CD8-positive, alpha-beta memory T cell (primary cell): ENCODE measurements at regions of chr16 and their contacts with region 1.

Region 1: DNA sequence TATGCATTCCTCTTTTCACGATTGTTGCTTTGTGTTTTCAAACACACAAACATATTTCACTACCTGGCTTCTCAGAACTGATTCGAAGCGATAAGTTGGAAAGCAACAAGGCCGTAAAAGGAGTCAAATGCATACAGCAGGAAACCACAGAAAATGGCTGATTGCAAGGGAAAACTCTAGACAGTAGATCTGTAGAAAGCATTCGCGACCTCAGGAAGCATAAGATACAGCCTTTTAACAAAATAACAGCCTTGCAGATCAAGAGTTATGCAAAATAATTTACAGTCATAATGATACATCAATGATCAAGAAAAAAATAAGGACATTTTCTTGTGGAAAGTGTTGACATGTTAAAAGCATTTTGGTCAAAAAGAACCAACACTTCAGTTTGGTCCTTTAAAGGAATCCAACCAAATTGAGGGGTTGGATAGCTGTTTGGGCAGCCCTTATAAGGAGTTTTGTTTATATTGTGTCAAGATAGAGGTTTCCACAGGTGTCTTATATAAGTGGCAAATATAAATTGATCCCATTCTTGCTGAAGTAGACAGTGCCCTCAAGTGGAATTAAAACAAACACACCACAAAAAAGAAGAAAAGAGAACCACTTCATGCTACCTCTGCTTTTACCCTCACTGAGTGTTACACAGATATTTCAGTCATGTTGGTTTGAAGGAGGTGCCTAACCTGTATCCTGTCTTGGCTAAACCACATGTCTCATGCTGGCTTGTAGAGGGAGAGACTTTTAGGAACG is 5.5 kb downstream of the CYLD start:
- DNase-seq: peak in 2 of 5 donors; percentile 59 to 72
- H3K4me3 ChIP-seq: peak overlapping the region; percentile 49
- H3K4me3 Mint-ChIP-seq: peak overlapping the region; percentile 80 to 99 (median 96)
- H3K27ac ChIP-seq: peak overlapping the region; percentile 22
- H3K27ac Mint-ChIP-seq: peak overlapping the region; percentile 34 to 99 (median 94)
- H3K4me1 ChIP-seq: peaks cover 70% of the 10 kb centered on the region
- H3K4me1 Mint-ChIP-seq: peaks cover 62 to 87% (median 82%) of the 10 kb centered on the region in 3 donors
- H3K27me3 ChIP-seq: no peaks in the 10 kb centered on the region
- H3K27me3 Mint-ChIP-seq: peaks cover 0 to 3% of the 10 kb centered on the region in 2 donors

Region 2: GRCh38 chr16:50671644-50672260 is 75.6 kb before region 1 on chr16:
- CTCF ChIA-PET with region 1: interaction called, 39 read pairs
- POLR2A ChIA-PET with region 1: interaction called, 4 read pairs
- DNase-seq: peak in 3 of 5 donors; percentile 21 to 31 (median 22)
- H3K4me3 ChIP-seq: no peak overlapping the region
- H3K4me3 Mint-ChIP-seq: peak overlapping the region in 1 of 7 donors; percentile 5
- H3K27ac ChIP-seq: no peak overlapping the region
- H3K27ac Mint-ChIP-seq: peak overlapping the region in 7 of 8 donors; percentile 4 to 91 (median 56)
- H3K4me1 ChIP-seq: peaks cover 14% of the 10 kb centered on the region
- H3K4me1 Mint-ChIP-seq: peaks cover 19 to 32% (median 31%) of the 10 kb centered on the region in 3 donors
- H3K27me3 ChIP-seq: no peaks in the 10 kb centered on the region
- H3K27me3 Mint-ChIP-seq: no peaks in the 10 kb centered on the region